GM12878 (cell line): ENCODE measurements at regions of chr1 and their contacts with region 1.

Region 1: GRCh38 chr1:99193431-99193830 is 70.9 kb upstream of the PLPPR4 start:
- DNase-seq: no peak
- ATAC-seq: no peak
- H3K4me3 ChIP-seq: no peak overlapping the region
- H3K27ac ChIP-seq: no peak overlapping the region
- H3K4me1 ChIP-seq: no peaks in the 10 kb centered on the region
- H3K27me3 ChIP-seq: no peaks in the 10 kb centered on the region; a peak in 1 of 4 replicates
- CTCF ChIP-seq: no peak
- EP300 ChIP-seq: no peak
- POLR2A ChIP-seq: no peak
- RAD21 ChIP-seq: no peak

Region 2: GRCh38 chr1:98981917-98982513 is 211.4 kb before region 1 on chr1:
- CTCF ChIA-PET with region 1: no interaction called
- POLR2A ChIA-PET with region 1: no interaction called
- RAD21 ChIA-PET with region 1: no interaction called
- SMC1A ChIA-PET with region 1: no interaction called
- in situ Hi-C with region 1: no loop called
- intact Hi-C with region 1: no loop called
- DNase-seq: no peak
- ATAC-seq: no peak
- H3K4me3 ChIP-seq: no peak overlapping the region
- H3K27ac ChIP-seq: no peak overlapping the region
- H3K4me1 ChIP-seq: no peaks in the 10 kb centered on the region
- H3K27me3 ChIP-seq: no peaks in the 10 kb centered on the region
- CTCF ChIP-seq: no peak
- EP300 ChIP-seq: no peak
- POLR2A ChIP-seq: no peak
- RAD21 ChIP-seq: no peak

Region 3: DNA sequence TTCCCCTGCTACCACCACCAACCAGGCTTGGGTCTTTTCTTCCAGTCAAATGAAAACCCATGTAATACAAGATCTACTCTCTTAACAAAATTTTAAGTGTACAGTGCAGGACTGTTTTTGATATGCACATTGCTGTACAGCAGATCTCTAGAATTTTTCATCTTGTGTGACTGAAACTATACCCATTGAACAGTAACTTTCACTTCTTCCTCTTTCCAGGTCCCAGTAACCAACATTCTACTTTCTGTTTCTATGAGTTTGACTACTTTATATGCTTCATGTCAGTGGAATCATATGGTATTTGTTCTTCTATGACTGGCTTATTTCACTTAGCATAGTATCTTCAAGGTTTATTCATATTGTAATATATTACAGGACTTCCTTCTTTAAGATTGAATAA is 25.6 kb after region 1 on chr1:
- CTCF ChIA-PET with region 1: no interaction called
- POLR2A ChIA-PET with region 1: no interaction called
- RAD21 ChIA-PET with region 1: no interaction called
- SMC1A ChIA-PET with region 1: no interaction called
- in situ Hi-C with region 1: no loop called
- intact Hi-C with region 1: loop called (anchors 1 kb)
- DNase-seq: peak; percentile 32
- ATAC-seq: peak; percentile 98
- H3K4me3 ChIP-seq: no peak overlapping the region
- H3K27ac ChIP-seq: no peak overlapping the region
- H3K4me1 ChIP-seq: no peaks in the 10 kb centered on the region
- H3K27me3 ChIP-seq: no peaks in the 10 kb centered on the region
- CTCF ChIP-seq: no peak
- EP300 ChIP-seq: no peak
- POLR2A ChIP-seq: no peak
- RAD21 ChIP-seq: no peak

Region 4: GRCh38 chr1:99490031-99490430 is 296.6 kb after region 1 on chr1:
- CTCF ChIA-PET with region 1: no interaction called
- POLR2A ChIA-PET with region 1: no interaction called
- RAD21 ChIA-PET with region 1: no interaction called
- SMC1A ChIA-PET with region 1: no interaction called
- in situ Hi-C with region 1: no loop called
- intact Hi-C with region 1: no loop called
- DNase-seq: no peak
- ATAC-seq: no peak
- H3K4me3 ChIP-seq: no peak overlapping the region
- H3K27ac ChIP-seq: no peak overlapping the region
- H3K4me1 ChIP-seq: no peaks in the 10 kb centered on the region
- H3K27me3 ChIP-seq: peaks cover 0 to 2% of the 10 kb centered on the region in 2 experiments; a peak in 1 of 4 replicates
- CTCF ChIP-seq: no peak
- EP300 ChIP-seq: no peak
- POLR2A ChIP-seq: no peak
- RAD21 ChIP-seq: no peak